Activated T-helper 2 cell treated with anti-CD3 and anti-CD28 coated beads, Interferon-gamma antibody, Interleukin-2, Interleukin-4, amounts not matched to agents 10 μg/mL and 5 μg/mL and 100 μg/mL, durations not matched to agents 14 hours and 24 hours and 36 hours (primary cell): ENCODE measurements at regions of chr11 and their contacts with region 1.

Region 1: DNA sequence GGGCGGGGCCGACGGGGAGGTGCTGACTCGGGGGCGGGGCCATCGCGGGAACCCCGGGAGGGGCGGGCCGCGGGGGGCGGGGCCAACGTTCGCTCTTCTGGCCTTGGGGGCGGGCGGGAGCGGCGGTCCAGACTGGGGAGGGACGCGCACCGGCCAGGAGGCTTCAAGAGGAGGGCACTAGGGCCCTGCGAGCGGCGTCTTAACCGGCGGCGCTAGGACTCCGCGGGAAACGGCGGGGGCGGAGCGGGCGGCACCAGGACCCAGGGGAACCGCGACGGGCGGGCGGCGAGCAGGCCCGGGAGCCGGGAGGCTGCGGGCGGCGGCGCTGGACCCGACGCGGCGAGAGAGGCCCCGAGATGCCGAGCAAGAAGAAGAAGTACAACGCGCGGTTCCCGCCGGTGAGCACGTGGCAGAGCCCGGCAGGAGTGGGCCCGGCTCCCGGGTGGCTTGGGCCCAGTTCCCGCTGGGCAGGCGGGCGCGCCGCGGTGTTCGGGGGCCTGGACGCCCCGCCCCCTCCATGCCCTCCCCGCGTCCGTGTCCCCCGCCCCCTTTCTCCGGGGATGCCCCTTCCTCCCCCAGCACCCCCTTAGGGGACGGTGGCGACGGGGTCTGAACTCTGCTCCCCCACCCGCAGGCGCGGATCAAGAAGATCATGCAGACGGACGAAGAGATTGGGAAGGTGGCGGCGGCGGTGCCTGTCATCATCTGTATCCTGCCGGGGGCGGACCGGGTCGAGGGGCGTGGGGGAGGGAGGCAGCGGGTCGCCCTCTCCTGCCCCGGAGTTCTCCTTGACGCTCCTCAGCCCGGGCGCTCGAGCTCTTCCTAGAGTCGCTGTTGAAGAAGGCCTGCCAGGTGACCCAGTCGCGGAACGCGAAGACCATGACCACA is at the start of gene DRAP1:
- DNase-seq: peak; percentile 97
- H3K4me3 Mint-ChIP-seq: peak within 1 kb of the TSS; percentile 88
- H3K27ac Mint-ChIP-seq: peak within 1 kb of the TSS; percentile 85
- H3K4me1 Mint-ChIP-seq: peaks cover 19% of the 10 kb centered on the region
- H3K27me3 Mint-ChIP-seq: no peaks in the 10 kb centered on the region
- total RNA-seq, gene DRAP1: 116 and 118 TPM in 2 replicates

Region 2: DNA sequence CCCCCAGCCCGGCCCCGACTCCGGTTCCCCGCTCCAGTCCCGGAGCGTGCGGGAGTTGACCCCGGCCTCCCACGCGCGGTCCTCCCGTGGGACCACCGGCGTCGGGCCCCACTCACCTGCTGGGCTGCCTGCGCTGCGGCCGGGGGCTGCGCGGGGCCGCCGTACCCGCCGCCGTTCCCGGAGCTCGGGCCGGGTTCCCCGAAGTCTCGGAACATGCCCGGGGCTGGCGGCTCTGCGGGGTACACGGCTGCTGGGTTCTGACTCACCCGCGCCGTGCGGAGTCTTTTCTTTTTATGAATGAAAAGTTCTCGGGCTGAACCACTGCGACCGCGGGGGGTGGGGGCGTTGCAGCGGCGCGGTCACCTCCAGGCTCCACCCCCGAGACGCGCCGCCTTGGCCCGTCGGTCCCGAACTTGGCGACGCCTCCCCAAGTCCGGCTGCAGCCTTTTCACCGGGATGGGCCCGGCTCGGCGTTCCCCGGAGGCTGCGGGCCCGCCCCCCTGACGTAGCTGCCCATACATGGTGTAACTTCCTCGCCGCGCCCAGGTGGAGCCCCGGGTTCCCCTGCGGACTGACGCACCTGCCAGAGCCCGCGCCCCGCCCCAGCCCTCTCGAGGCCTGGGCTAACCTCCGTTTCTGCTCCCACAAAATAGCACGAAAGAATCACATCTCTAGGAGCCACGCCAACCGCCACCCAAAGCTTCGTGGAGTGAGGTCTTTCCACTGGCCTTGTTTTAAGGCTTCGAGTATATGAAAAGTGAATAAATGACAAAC is 19.1 kb before region 1 on chr11 and contains the start of gene FOSL1:
- intact Hi-C with region 1: loop called (anchors 1 kb)
- DNase-seq: peak; percentile 89
- H3K4me3 Mint-ChIP-seq: peak within 1 kb of the TSS; percentile 82
- H3K27ac Mint-ChIP-seq: peak within 1 kb of the TSS; percentile 74
- H3K4me1 Mint-ChIP-seq: peaks cover 33% of the 10 kb centered on the region
- H3K27me3 Mint-ChIP-seq: no peaks in the 10 kb centered on the region
- total RNA-seq, gene FOSL1: 24.0 and 25.9 TPM in 2 replicates

Region 3: GRCh38 chr11:67195971-67196456 is 1276.6 kb after region 1 on chr11:
- intact Hi-C with region 1: no loop called
- DNase-seq: no peak
- H3K4me3 Mint-ChIP-seq: no peak overlapping the region
- H3K27ac Mint-ChIP-seq: no peak overlapping the region
- H3K4me1 Mint-ChIP-seq: no peaks in the 10 kb centered on the region
- H3K27me3 Mint-ChIP-seq: no peaks in the 10 kb centered on the region